CD8-positive, alpha-beta T cell (primary cell): ENCODE measurements at regions of chr19 and their contacts with region 1.

Region 1: DNA sequence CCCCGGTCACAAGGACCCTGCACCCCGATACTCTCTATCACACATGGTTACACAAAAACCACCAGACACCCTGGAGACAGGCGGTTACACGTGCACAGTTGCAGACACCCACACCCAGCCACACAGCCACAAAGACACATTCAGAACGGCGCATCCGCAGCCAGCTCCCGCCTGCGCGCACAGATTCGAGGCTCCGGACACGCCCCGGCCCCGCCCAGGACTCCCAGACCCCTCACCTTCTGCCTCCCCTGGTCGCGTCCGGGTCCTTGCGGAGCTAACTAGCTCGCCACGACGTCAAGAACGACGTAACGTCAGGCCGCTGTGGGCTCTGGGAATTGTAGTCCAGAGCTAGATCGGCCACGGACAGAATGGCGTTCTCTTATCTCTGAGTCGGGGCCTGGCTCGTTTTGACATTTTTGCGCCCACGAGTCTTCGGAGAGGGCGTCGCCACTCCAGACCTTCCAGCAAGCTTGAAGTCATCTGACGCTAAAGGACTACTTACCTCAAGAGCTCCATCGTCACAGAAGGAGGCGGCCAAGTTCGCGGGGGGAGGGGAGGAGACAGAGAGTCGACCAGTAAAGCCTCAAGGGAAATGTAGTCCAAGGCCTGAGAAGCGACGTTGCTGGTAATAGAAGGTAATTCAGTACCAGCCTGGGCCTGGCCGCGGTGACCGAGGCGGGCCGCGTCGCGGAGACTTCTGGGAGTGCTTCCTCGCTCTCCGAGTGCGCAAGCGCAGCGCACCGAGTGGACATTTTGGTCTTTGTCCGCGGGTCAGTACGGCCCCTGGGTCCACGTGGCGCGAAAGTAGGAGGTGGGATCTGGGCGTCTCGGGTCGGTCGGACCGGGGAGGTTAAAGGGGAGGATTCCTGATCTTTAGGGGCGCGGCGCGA is at the starts of genes ZNF146 and ZNF565:
- DNase-seq: peak; percentile 90 to 98 (median 95)
- ATAC-seq: peak; percentile 83
- H3K4me3 ChIP-seq: peak within 1 kb of the TSS; percentile 73 to 85
- H3K4me3 Mint-ChIP-seq: no peak within 1 kb of the TSS
- H3K27ac ChIP-seq: peak within 1 kb of the TSS; percentile 92 to 99
- H3K27ac Mint-ChIP-seq: no peak within 1 kb of the TSS
- H3K4me1 ChIP-seq: peaks cover 22% of the 10 kb centered on the region
- H3K4me1 Mint-ChIP-seq: peaks cover 32% of the 10 kb centered on the region
- H3K27me3 ChIP-seq: no peaks in the 10 kb centered on the region
- H3K27me3 Mint-ChIP-seq: no peaks in the 10 kb centered on the region
- CTCF ChIP-seq: no peak
- total RNA-seq, gene ZNF146: 16.8 to 18.9 TPM
- total RNA-seq, gene ZNF565: 9.4 to 10.8 TPM

Region 2: GRCh38 chr19:35931161-35931873 is 283.3 kb before region 1 on chr19:
- CTCF ChIA-PET with region 1: no interaction called
- POLR2A ChIA-PET with region 1: no interaction called
- intact Hi-C with region 1: loop called in 1 of 2 experiments (anchors 1 kb)
- DNase-seq: peak; percentile 97 to 100 (median 99)
- ATAC-seq: peak; percentile 98
- H3K4me3 ChIP-seq: peak overlapping the region; percentile 43 to 56
- H3K4me3 Mint-ChIP-seq: peak overlapping the region; percentile 48
- H3K27ac ChIP-seq: peak overlapping the region; percentile 64 to 84
- H3K27ac Mint-ChIP-seq: peak overlapping the region; percentile 89
- H3K4me1 ChIP-seq: peaks cover 43% of the 10 kb centered on the region
- H3K4me1 Mint-ChIP-seq: peaks cover 47% of the 10 kb centered on the region
- H3K27me3 ChIP-seq: no peaks in the 10 kb centered on the region
- H3K27me3 Mint-ChIP-seq: no peaks in the 10 kb centered on the region
- CTCF ChIP-seq: peak; percentile 85

Region 3: GRCh38 chr19:36132489-36132891 is 82.1 kb before region 1 on chr19:
- CTCF ChIA-PET with region 1: interaction called, 6 read pairs
- POLR2A ChIA-PET with region 1: interaction called, 3 read pairs
- intact Hi-C with region 1: loop called in 1 of 2 experiments (anchors 5 kb)
- DNase-seq: peak in 4 of 9 experiments; percentile 19 to 60 (median 37)
- ATAC-seq: no peak
- H3K4me3 ChIP-seq: no peak overlapping the region
- H3K4me3 Mint-ChIP-seq: no peak overlapping the region
- H3K27ac ChIP-seq: peak overlapping the region in 1 of 2 experiments; percentile 54
- H3K27ac Mint-ChIP-seq: no peak overlapping the region
- H3K4me1 ChIP-seq: peaks cover 5% of the 10 kb centered on the region
- H3K4me1 Mint-ChIP-seq: peaks cover 15% of the 10 kb centered on the region
- H3K27me3 ChIP-seq: no peaks in the 10 kb centered on the region
- H3K27me3 Mint-ChIP-seq: no peaks in the 10 kb centered on the region
- CTCF ChIP-seq: no peak

Region 4: DNA sequence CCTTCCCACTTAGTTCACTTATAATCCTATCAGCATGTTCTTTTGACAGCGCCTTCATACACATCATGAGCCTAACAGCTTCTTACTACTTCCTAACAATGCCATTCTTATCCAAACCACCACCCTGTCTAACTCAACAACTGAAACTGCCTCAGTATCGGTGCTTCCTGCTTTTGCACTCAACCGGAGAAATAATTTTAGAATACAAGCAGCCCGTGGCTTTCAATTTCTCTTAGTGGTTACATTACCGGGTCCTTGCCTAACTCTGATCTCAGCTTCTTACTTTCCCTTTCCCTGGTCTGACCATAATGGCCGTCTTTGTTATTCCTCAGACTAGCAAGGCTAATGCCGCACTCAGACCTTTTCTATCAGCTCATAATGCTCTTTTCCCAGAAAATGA is 186.8 kb after region 1 on chr19:
- CTCF ChIA-PET with region 1: no interaction called
- POLR2A ChIA-PET with region 1: no interaction called
- intact Hi-C with region 1: no loop called
- DNase-seq: no peak
- ATAC-seq: no peak
- H3K4me3 ChIP-seq: no peak overlapping the region
- H3K4me3 Mint-ChIP-seq: no peak overlapping the region
- H3K27ac ChIP-seq: no peak overlapping the region
- H3K27ac Mint-ChIP-seq: no peak overlapping the region
- H3K4me1 ChIP-seq: no peaks in the 10 kb centered on the region
- H3K4me1 Mint-ChIP-seq: no peaks in the 10 kb centered on the region
- H3K27me3 ChIP-seq: no peaks in the 10 kb centered on the region
- H3K27me3 Mint-ChIP-seq: no peaks in the 10 kb centered on the region
- CTCF ChIP-seq: no peak

Region 5: DNA sequence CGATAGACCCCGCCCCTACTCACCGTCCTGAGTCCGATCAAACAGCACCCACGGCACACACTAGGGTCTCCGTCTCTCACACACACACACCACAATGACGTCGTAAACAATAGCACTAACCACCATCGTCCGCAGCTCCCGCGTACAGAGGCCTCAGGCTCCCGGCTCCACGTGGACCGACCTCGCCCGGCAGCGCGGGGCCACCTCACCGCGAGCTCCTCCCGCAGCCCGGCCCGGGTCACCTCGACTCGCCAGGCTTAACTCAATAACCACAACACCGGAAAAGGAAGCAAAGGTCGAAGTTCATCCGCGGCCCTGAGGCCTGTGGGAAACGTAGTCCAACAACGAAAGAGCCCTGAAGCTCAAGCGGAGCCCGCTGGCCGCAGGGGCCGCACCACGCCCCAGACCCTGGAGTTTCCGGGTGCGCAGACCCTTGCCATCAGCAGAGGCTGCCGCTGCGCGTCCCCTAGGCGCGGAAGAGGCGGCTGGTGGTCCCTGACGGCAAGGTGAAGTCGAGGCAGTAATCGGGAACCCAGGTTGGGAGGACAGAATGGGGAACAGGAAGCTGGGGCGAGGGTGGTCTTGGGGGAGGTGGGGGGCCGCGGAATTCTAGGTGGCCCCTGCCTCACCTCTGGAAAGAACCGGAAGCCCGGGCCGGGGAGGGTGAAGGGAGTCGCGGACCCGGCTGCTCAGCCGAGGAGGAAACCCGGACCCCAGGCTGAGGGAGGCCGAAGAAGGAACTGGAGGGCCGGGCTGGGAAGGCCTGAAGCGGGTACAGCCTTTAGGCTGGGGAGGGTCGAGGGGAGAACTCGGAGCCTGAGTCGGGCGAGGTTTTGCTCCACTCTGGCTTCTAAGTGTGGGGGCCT is 358.6 kb after region 1 on chr19 and contains the start of gene ZNF529:
- CTCF ChIA-PET with region 1: no interaction called
- POLR2A ChIA-PET with region 1: no interaction called
- intact Hi-C with region 1: loop called in 1 of 2 experiments (anchors 10 kb)
- DNase-seq: peak; percentile 75 to 98 (median 85)
- ATAC-seq: peak; percentile 93
- H3K4me3 ChIP-seq: peak within 1 kb of the TSS; percentile 87 to 99
- H3K4me3 Mint-ChIP-seq: peak within 1 kb of the TSS; percentile 87
- H3K27ac ChIP-seq: peak within 1 kb of the TSS; percentile 96 to 98
- H3K27ac Mint-ChIP-seq: peak within 1 kb of the TSS; percentile 99
- H3K4me1 ChIP-seq: peaks cover 19% of the 10 kb centered on the region
- H3K4me1 Mint-ChIP-seq: peaks cover 45% of the 10 kb centered on the region
- H3K27me3 ChIP-seq: no peaks in the 10 kb centered on the region
- H3K27me3 Mint-ChIP-seq: no peaks in the 10 kb centered on the region
- CTCF ChIP-seq: no peak
- total RNA-seq, gene ZNF529: 44.0 to 46.4 TPM

Region 6: GRCh38 chr19:36772311-36773222 is 557.9 kb after region 1 on chr19 and contains the start of gene ZNF850:
- CTCF ChIA-PET with region 1: no interaction called
- POLR2A ChIA-PET with region 1: no interaction called
- intact Hi-C with region 1: loop called in 1 of 2 experiments (anchors 2 kb)
- DNase-seq: peak; percentile 86 to 97 (median 95)
- ATAC-seq: peak; percentile 90
- H3K4me3 ChIP-seq: peak within 1 kb of the TSS; percentile 77 to 100
- H3K4me3 Mint-ChIP-seq: peak within 1 kb of the TSS; percentile 99
- H3K27ac ChIP-seq: peak within 1 kb of the TSS; percentile 85 to 89
- H3K27ac Mint-ChIP-seq: peak within 1 kb of the TSS; percentile 94
- H3K4me1 ChIP-seq: peaks cover 21% of the 10 kb centered on the region
- H3K4me1 Mint-ChIP-seq: peaks cover 23% of the 10 kb centered on the region
- H3K27me3 ChIP-seq: no peaks in the 10 kb centered on the region
- H3K27me3 Mint-ChIP-seq: no peaks in the 10 kb centered on the region
- CTCF ChIP-seq: no peak
- total RNA-seq, gene ZNF850: 1.5 to 2.7 TPM

Region 7: GRCh38 chr19:37077934-37078725 is 863.5 kb after region 1 on chr19 and contains the start of gene ZNF420:
- CTCF ChIA-PET with region 1: no interaction called
- POLR2A ChIA-PET with region 1: interaction called, 7 read pairs
- intact Hi-C with region 1: loop called in 1 of 2 experiments (anchors 5 kb)
- DNase-seq: peak; percentile 78 to 96 (median 89)
- ATAC-seq: peak; percentile 88
- H3K4me3 ChIP-seq: peak within 1 kb of the TSS; percentile 60 to 71
- H3K4me3 Mint-ChIP-seq: peak within 1 kb of the TSS; percentile 89
- H3K27ac ChIP-seq: peak within 1 kb of the TSS; percentile 56 to 82
- H3K27ac Mint-ChIP-seq: peak within 1 kb of the TSS; percentile 92
- H3K4me1 ChIP-seq: peaks cover 9% of the 10 kb centered on the region
- H3K4me1 Mint-ChIP-seq: peaks cover 34% of the 10 kb centered on the region
- H3K27me3 ChIP-seq: no peaks in the 10 kb centered on the region
- H3K27me3 Mint-ChIP-seq: no peaks in the 10 kb centered on the region
- CTCF ChIP-seq: no peak
- total RNA-seq, gene ZNF420: 7.0 to 8.9 TPM

Region 8: GRCh38 chr19:37506387-37507166 is 1291.9 kb after region 1 on chr19 and contains the start of gene ZNF793:
- CTCF ChIA-PET with region 1: no interaction called
- POLR2A ChIA-PET with region 1: no interaction called
- intact Hi-C with region 1: loop called in 1 of 2 experiments (anchors 10 kb)
- DNase-seq: peak; percentile 53 to 89 (median 83)
- ATAC-seq: peak; percentile 87
- H3K4me3 ChIP-seq: peak within 1 kb of the TSS; percentile 82 to 86
- H3K4me3 Mint-ChIP-seq: no peak within 1 kb of the TSS
- H3K27ac ChIP-seq: peak within 1 kb of the TSS; percentile 94 to 97
- H3K27ac Mint-ChIP-seq: no peak within 1 kb of the TSS
- H3K4me1 ChIP-seq: peaks cover 16% of the 10 kb centered on the region
- H3K4me1 Mint-ChIP-seq: no peaks in the 10 kb centered on the region
- H3K27me3 ChIP-seq: no peaks in the 10 kb centered on the region
- H3K27me3 Mint-ChIP-seq: no peaks in the 10 kb centered on the region
- CTCF ChIP-seq: no peak
- total RNA-seq, gene ZNF793: 2.4 to 3.3 TPM